Activated CD4-positive, alpha-beta memory T cell treated with anti-CD3 and anti-CD28 coated beads, Interleukin-2, amount 10 ng/mL, durations not matched to agents 7 days and 5 days (primary cell): ENCODE measurements at regions of chr12 and their contacts with region 1.

Region 1: DNA sequence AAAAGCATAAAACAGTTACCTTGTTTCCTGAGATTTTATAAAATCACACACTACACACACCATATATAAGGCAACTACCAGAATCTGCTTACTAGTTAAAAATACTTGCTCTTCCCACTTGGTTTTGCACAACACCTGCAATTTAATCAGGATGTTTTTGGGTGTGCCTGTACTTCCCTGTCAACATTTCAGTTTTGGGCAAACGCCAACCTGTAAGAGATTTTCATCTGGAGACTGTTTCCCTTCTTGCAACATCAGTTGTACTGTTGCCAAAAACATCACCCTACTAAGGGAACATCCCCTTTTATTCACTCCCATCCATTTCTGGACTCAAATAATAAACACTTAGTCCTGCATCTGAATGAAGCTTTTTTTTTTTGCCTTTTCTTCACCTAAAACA is 172.3 kb downstream of the DUSP6 start:
- DNase-seq: no peak
- H3K4me3 Mint-ChIP-seq: no peak overlapping the region
- H3K27ac Mint-ChIP-seq: peak overlapping the region; percentile 80
- H3K4me1 Mint-ChIP-seq: peaks cover 50% of the 10 kb centered on the region
- H3K27me3 Mint-ChIP-seq: no peaks in the 10 kb centered on the region

Region 2: GRCh38 chr12:89122852-89123251 is 57.1 kb before region 1 on chr12:
- CTCF ChIA-PET with region 1: no interaction called
- POLR2A ChIA-PET with region 1: no interaction called
- DNase-seq: no peak
- H3K4me3 Mint-ChIP-seq: no peak overlapping the region
- H3K27ac Mint-ChIP-seq: no peak overlapping the region
- H3K4me1 Mint-ChIP-seq: no peaks in the 10 kb centered on the region
- H3K27me3 Mint-ChIP-seq: no peaks in the 10 kb centered on the region

Region 3: DNA sequence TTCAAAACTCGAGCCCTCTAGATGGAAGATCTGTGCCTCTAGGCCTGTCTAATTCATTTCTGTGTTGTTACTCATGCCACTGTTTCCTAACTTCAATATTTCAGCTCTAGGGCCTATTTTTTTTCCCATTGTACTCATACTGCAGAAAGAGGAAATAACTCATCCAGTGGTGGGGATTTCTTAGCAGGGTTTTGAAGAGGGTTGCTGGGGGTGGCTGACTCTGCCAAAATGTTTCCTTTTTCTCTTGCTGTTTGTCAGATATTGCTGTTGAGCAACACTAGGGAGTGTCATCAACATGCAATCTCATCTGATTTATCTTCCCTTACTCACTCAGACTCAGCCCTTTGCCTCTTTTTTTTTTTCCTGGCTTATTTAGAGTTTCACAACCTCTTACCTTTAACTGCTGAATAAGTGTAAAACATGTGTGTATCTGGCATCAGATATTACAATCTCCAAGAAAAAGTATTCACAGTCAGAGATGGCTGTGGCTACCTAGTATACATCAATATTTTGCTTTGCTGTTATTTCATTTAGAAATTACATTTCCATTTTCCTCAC is 17.2 kb before region 1 on chr12:
- CTCF ChIA-PET with region 1: interaction called, 8 read pairs
- POLR2A ChIA-PET with region 1: interaction called, 20 read pairs
- DNase-seq: peak; percentile 70
- H3K4me3 Mint-ChIP-seq: no peak overlapping the region
- H3K27ac Mint-ChIP-seq: no peak overlapping the region
- H3K4me1 Mint-ChIP-seq: peaks cover 25% of the 10 kb centered on the region
- H3K27me3 Mint-ChIP-seq: no peaks in the 10 kb centered on the region

Region 4: GRCh38 chr12:89192428-89192827 is 12.4 kb after region 1 on chr12:
- CTCF ChIA-PET with region 1: interaction called, 4 read pairs
- POLR2A ChIA-PET with region 1: interaction called, 12 read pairs
- DNase-seq: no peak
- H3K4me3 Mint-ChIP-seq: no peak overlapping the region
- H3K27ac Mint-ChIP-seq: no peak overlapping the region
- H3K4me1 Mint-ChIP-seq: no peaks in the 10 kb centered on the region
- H3K27me3 Mint-ChIP-seq: no peaks in the 10 kb centered on the region

Region 5: GRCh38 chr12:89225808-89226411 is 45.9 kb after region 1 on chr12:
- CTCF ChIA-PET with region 1: interaction called, 4 read pairs
- POLR2A ChIA-PET with region 1: interaction called, 17 read pairs
- DNase-seq: peak; percentile 30
- H3K4me3 Mint-ChIP-seq: peak overlapping the region; percentile 12
- H3K27ac Mint-ChIP-seq: peak overlapping the region; percentile 92
- H3K4me1 Mint-ChIP-seq: peaks cover 73% of the 10 kb centered on the region
- H3K27me3 Mint-ChIP-seq: no peaks in the 10 kb centered on the region

Region 6: GRCh38 chr12:89333564-89334252 is 153.7 kb after region 1 on chr12:
- CTCF ChIA-PET with region 1: no interaction called
- POLR2A ChIA-PET with region 1: no interaction called
- DNase-seq: peak; percentile 55
- H3K4me3 Mint-ChIP-seq: peak overlapping the region; percentile 49
- H3K27ac Mint-ChIP-seq: peak overlapping the region; percentile 54
- H3K4me1 Mint-ChIP-seq: peaks cover 29% of the 10 kb centered on the region
- H3K27me3 Mint-ChIP-seq: no peaks in the 10 kb centered on the region